ENCODE measurements at regions of chr12 and their contacts with region 1.

Region 1: DNA sequence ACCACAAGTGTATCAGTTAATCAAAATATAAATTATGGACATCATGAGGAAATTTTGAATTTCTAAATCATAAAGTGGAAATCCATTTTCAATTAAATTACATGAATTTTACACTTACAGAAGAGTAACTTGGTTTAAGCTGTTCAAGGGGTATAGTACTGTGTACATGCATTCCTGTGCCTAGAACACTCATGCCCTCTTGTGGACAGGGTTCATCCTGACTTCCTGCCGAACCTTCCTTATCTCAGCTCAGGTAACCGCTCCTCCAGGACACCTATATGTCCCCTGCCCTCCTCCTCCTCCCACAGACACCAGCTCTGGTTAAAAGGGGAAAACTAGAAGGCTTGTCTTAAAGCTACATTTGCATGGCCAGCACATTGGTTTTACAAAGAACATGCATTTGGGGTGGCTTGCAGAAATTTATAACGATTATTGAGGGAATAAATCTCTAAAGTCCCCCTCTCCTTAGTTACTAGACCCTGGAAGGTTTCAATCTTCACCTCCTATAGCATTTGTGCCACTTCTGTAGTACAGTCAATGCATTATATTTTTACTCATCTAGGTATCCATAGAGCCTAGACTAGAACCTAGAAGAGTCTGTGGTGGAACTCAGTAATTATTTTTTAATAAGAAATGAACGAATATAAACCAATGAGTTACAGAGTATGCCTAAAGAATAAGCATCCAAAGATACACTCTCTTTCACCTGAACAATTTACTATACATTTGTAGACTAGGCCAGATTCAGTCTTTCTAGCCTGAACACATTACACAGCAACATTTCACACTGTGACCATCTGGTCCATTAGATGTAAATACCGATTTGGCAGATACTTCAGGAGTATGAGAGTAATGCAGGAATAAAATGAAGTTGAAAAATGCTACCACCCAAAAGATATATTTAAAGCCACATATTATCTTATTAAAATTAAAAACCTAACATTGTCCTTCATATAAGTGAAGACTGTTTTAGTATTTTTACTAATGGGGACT is 345.6 kb downstream of the PAWR start:
- DNase-seq: peak in 1 of 2 experiments; percentile 25
- H3K4me3 ChIP-seq: no peak overlapping the region
- H3K27ac ChIP-seq: no peak overlapping the region
- H3K4me1 ChIP-seq: no peaks in the 10 kb centered on the region
- H3K27me3 ChIP-seq: no peaks in the 10 kb centered on the region
- CTCF ChIP-seq: peak; percentile 74 to 85 (median 74)
- EP300 ChIP-seq: no peak
- POLR2A ChIP-seq: no peak
- RAD21 ChIP-seq: peak; percentile 94 to 96

Region 2: GRCh38 chr12:79333144-79333543 is 12.0 kb before region 1 on chr12:
- CTCF ChIA-PET with region 1: interaction called, 17 read pairs
- POLR2A ChIA-PET with region 1: no interaction called
- DNase-seq: no peak
- H3K4me3 ChIP-seq: no peak overlapping the region
- H3K27ac ChIP-seq: no peak overlapping the region
- H3K4me1 ChIP-seq: peaks cover 0 to 6% (median 3%) of the 10 kb centered on the region in 4 experiments; a peak in 4 of 7 replicates
- H3K27me3 ChIP-seq: peaks cover 0 to 2% (median 0%) of the 10 kb centered on the region in 4 experiments; a peak in 1 of 7 replicates
- CTCF ChIP-seq: no peak
- EP300 ChIP-seq: no peak
- POLR2A ChIP-seq: no peak
- RAD21 ChIP-seq: no peak

Region 3: GRCh38 chr12:79358716-79359300 is 13.7 kb after region 1 on chr12:
- CTCF ChIA-PET with region 1: interaction called, 10 read pairs
- POLR2A ChIA-PET with region 1: no interaction called
- DNase-seq: no peak
- H3K4me3 ChIP-seq: no peak overlapping the region
- H3K27ac ChIP-seq: no peak overlapping the region
- H3K4me1 ChIP-seq: peaks cover 0 to 4% (median 0%) of the 10 kb centered on the region in 4 experiments; a peak in 1 of 7 replicates
- H3K27me3 ChIP-seq: peaks cover 0 to 1% (median 0%) of the 10 kb centered on the region in 4 experiments; a peak in 1 of 7 replicates
- CTCF ChIP-seq: peak in 2 of 3 experiments; percentile 28; a peak in 3 of 4 replicates
- EP300 ChIP-seq: no peak
- POLR2A ChIP-seq: no peak
- RAD21 ChIP-seq: peak; percentile 19 to 43; a peak in 2 of 4 replicates